ENCODE measurements at regions of chr7 and their contacts with region 1.

Region 1: DNA sequence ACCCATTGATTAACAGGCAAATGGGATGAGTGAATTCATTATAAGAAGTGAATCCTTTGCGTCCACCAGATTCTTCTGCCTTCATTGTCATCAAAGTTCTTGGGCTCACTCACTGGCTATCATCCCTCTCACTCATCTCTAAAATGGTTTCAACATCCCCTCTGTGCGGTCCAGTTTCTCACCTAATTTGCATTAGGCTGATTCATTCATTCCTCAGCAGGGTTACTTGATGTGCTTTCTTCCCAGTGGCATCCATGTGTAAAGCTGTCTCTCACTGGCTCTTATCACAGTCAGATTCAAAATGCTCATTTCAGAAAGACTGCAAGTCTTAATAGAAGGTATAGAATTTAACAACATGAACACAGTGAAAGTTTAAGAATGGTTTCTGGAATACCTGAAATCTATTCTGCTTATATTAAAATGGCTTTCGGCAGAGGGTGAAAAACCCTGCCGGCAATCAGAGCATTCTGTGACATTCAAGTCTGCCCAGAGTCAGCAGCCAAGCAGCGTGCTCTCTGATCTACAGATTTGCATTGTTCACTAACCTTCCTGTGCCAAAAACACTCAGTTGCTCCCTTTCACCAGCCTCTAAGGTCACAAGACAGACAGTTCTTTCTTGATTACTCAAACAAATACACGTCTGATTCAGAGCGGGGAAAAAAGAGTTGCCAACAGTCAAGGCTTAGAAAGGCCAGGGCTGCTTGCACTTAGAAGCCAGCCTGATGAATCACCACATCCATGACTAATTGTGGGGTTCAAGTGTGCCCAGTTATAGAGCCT is 106.7 kb downstream of the TES start:
- DNase-seq: peak; percentile 98
- ATAC-seq: peak; percentile 93
- H3K4me3 ChIP-seq: peak overlapping the region; percentile 29
- H3K27ac ChIP-seq: peak overlapping the region; percentile 87
- H3K4me1 ChIP-seq: peaks cover 25% of the 10 kb centered on the region
- H3K27me3 ChIP-seq: no peaks in the 10 kb centered on the region
- CTCF ChIP-seq: no peak

Region 2: GRCh38 chr7:116340943-116341907 is 24.2 kb after region 1 on chr7:
- CTCF ChIA-PET with region 1: no interaction called
- POLR2A ChIA-PET with region 1: no interaction called
- intact Hi-C with region 1: loop called (anchors 2 kb)
- DNase-seq: peak; percentile 27
- ATAC-seq: no peak
- H3K4me3 ChIP-seq: no peak overlapping the region
- H3K27ac ChIP-seq: peak overlapping the region; percentile 46
- H3K4me1 ChIP-seq: peaks cover 42% of the 10 kb centered on the region
- H3K27me3 ChIP-seq: no peaks in the 10 kb centered on the region
- CTCF ChIP-seq: peak; percentile 59

Region 3: GRCh38 chr7:116588641-116589594 is 271.9 kb after region 1 on chr7:
- CTCF ChIA-PET with region 1: no interaction called
- POLR2A ChIA-PET with region 1: no interaction called
- intact Hi-C with region 1: loop called (anchors 1 kb)
- DNase-seq: peak; percentile 88
- ATAC-seq: peak; percentile 49
- H3K4me3 ChIP-seq: no peak overlapping the region
- H3K27ac ChIP-seq: peak overlapping the region; percentile 3; the same call in 1 of the 2 replicates
- H3K4me1 ChIP-seq: peaks cover 26% of the 10 kb centered on the region
- H3K27me3 ChIP-seq: no peaks in the 10 kb centered on the region
- CTCF ChIP-seq: peak; percentile 87

Region 4: GRCh38 chr7:117014673-117015133 is 697.7 kb after region 1 on chr7:
- CTCF ChIA-PET with region 1: no interaction called
- POLR2A ChIA-PET with region 1: no interaction called
- intact Hi-C with region 1: no loop called
- DNase-seq: no peak
- ATAC-seq: no peak
- H3K4me3 ChIP-seq: no peak overlapping the region
- H3K27ac ChIP-seq: no peak overlapping the region
- H3K4me1 ChIP-seq: peaks cover 18% of the 10 kb centered on the region
- H3K27me3 ChIP-seq: no peaks in the 10 kb centered on the region
- CTCF ChIP-seq: no peak